ENCODE measurements at regions of chr9 and their contacts with region 1.

Region 1: DNA sequence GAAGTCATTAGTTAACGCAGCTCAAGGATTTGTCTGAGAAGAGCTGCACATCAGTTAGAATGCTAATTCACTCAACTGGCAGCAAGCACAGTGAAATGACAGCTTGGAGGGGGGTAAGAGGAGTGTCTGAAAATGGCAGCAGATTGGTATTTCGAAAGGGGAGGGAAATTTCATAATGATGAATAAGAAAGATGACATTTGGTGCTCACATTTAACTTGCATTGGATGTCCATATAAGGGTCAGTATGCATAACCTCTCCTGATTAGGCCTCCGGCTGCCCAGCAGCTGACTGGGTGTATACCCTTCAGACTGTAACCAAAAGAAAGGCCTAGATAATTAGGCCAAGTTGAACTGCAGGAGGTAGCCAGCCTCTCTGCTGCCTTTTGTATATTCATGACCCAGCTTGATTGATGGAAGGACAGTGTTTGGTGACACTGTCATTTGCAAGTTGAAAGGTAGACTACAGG is 131.0 kb downstream of the PBX3 start:
- DNase-seq: no peak
- H3K4me3 ChIP-seq: no peak overlapping the region
- H3K27ac ChIP-seq: no peak overlapping the region
- H3K4me1 ChIP-seq: no peaks in the 10 kb centered on the region
- H3K27me3 ChIP-seq: peaks cover 55% of the 10 kb centered on the region
- CTCF ChIP-seq: no peak

Region 2: GRCh38 chr9:125829743-125830142 is 48.5 kb before region 1 on chr9:
- CTCF ChIA-PET with region 1: no interaction called
- POLR2A ChIA-PET with region 1: no interaction called
- intact Hi-C with region 1: loop called (anchors 5 kb)
- DNase-seq: peak; percentile 1
- H3K4me3 ChIP-seq: no peak overlapping the region
- H3K27ac ChIP-seq: no peak overlapping the region
- H3K4me1 ChIP-seq: no peaks in the 10 kb centered on the region
- H3K27me3 ChIP-seq: peaks cover 78% of the 10 kb centered on the region
- CTCF ChIP-seq: no peak

Region 3: DNA sequence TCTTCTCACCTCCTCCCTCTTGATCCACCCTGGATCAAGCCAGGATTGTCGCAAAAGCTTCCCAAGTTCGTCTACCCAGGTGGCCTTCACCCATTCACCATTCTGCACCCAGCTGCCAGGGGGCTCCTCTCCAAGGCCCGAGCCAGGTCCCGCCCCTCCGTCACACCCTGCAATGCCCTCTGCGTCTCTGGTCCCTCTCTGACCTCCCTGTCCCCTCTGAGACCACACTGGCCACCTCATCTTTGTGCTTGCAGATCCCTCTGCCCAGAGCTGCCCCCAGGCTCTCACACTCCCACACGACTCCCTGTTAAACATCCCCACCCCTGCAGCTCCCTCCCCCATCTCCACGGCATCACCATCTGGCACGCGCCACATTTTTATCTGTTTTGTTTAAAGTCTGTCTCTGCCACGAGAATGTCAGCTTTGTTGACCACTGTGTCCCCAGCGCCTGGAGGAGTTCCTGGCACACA is 112.6 kb after region 1 on chr9:
- CTCF ChIA-PET with region 1: no interaction called
- POLR2A ChIA-PET with region 1: no interaction called
- intact Hi-C with region 1: no loop called
- DNase-seq: no peak
- H3K4me3 ChIP-seq: no peak overlapping the region
- H3K27ac ChIP-seq: no peak overlapping the region
- H3K4me1 ChIP-seq: no peaks in the 10 kb centered on the region
- H3K27me3 ChIP-seq: no peaks in the 10 kb centered on the region
- CTCF ChIP-seq: no peak